ENCODE measurements at regions of chr3 and their contacts with region 1.

Region 1: GRCh38 chr3:69671082-69671952 is 67.9 kb upstream of the MITF start:
- DNase-seq: peak; percentile 68
- H3K4me3 ChIP-seq: no peak overlapping the region; a peak in 2 of 4 replicates
- H3K27ac ChIP-seq: peak overlapping the region in 1 of 2 experiments; percentile 83; a peak in 2 of 4 replicates
- H3K4me1 ChIP-seq: peaks cover 0 to 13% of the 10 kb centered on the region in 2 experiments; a peak in 2 of 4 replicates
- H3K27me3 ChIP-seq: no peaks in the 10 kb centered on the region
- CTCF ChIP-seq: peak; percentile 85
- EP300 ChIP-seq: peak in 1 of 2 experiments; percentile 91; a peak in 2 of 4 replicates
- RAD21 ChIP-seq: peak; percentile 91

Region 2: DNA sequence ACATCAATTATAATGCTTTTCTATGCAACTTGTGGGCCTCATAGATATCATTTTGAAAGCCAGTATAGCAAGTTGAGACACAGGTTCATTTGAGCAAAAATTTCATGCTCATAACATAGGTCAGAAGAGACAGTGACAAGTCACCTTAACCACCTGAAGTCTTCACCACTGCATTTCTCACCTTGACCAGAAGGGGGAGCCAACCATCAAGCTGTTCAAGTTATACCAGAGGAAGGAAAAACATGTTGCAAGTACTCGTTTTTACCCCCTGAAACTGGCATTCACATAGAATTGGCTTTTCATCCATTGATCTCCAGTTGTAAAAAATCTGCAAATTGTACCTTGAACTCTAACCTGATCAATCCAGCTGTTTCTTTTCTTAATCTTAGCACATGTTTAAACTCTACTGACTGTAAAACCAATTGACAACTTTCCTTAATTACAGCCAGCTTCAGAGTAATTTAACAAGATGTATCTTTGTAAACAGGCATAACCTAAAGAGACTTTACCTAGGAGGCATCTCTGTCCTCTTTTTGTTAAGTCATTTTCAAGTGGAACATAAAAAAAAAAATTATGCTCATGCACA is 550.3 kb before region 1 on chr3:
- CTCF ChIA-PET with region 1: interaction called, 10 read pairs
- POLR2A ChIA-PET with region 1: no interaction called
- DNase-seq: peak; percentile 37
- H3K4me3 ChIP-seq: no peak overlapping the region; a peak in 1 of 4 replicates
- H3K27ac ChIP-seq: no peak overlapping the region
- H3K4me1 ChIP-seq: no peaks in the 10 kb centered on the region
- H3K27me3 ChIP-seq: no peaks in the 10 kb centered on the region
- CTCF ChIP-seq: peak; percentile 97
- EP300 ChIP-seq: no peak
- RAD21 ChIP-seq: peak; percentile 86

Region 3: DNA sequence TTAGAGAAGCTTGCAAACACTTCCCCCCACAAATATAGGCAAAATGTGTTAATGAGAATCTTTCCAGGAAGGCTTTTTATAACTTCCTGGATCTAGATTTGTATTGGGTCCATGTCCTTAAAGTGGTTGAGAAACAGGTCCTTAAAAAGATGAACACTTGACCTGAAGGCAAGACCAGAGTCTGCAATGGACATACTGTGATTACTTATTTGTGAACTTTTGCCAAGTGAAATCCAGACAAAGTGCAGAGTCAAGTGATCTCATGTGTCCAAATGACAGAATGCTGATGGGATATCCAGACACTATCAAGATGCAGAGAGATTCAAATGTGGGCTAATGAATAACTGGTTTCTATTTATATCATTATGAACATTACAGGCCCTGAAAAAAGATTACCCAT is 329.2 kb before region 1 on chr3:
- CTCF ChIA-PET with region 1: no interaction called
- POLR2A ChIA-PET with region 1: no interaction called
- DNase-seq: no peak
- H3K4me3 ChIP-seq: no peak overlapping the region
- H3K27ac ChIP-seq: no peak overlapping the region; a peak in 1 of 4 replicates
- H3K4me1 ChIP-seq: peaks cover 0 to 2% of the 10 kb centered on the region in 2 experiments; a peak in 1 of 4 replicates
- H3K27me3 ChIP-seq: no peaks in the 10 kb centered on the region
- CTCF ChIP-seq: no peak
- EP300 ChIP-seq: no peak
- RAD21 ChIP-seq: no peak

Region 4: DNA sequence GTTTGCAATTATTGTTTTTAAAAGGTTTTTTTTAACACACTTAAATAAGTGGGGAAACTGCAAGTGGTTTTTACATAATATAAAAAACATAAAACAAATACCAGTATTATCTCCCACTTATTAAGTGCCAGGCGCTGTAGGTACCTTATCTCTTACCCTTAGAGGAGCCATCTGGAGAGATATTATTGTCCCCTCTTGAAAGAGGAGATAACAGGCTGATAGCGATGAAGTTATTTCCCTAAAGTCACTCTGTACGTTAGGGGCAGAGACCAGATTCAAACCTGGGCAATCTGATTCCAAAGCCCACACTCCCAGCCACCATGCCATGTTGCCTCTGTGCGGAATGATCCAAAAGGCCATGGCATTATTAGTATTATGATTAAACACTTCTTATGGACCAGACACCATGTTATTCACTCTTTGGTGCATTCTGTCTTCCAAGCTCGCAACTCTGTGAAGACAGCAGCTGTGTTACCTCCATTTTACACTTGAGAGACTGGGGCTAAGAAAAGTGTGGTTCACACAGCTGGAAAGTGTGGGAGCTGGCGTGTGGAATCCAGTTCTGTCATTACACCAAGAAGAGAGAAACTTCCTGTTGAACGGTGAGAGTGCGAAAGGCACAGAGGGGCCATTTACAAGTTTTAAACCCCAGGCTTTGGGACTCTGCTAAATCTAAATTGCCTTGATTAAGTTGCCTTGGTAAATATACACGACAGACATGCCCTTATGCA is 12.0 kb before region 1 on chr3:
- CTCF ChIA-PET with region 1: interaction called, 18 read pairs
- POLR2A ChIA-PET with region 1: no interaction called
- DNase-seq: peak; percentile 55
- H3K4me3 ChIP-seq: no peak overlapping the region
- H3K27ac ChIP-seq: peak overlapping the region in 1 of 2 experiments; percentile 22; a peak in 2 of 4 replicates
- H3K4me1 ChIP-seq: peaks cover 0 to 11% of the 10 kb centered on the region in 2 experiments; a peak in 2 of 4 replicates
- H3K27me3 ChIP-seq: peaks cover 9% of the 10 kb centered on the region; the same call in 1 of the 2 replicates
- CTCF ChIP-seq: no peak
- EP300 ChIP-seq: peak in 1 of 2 experiments; percentile 77; a peak in 2 of 4 replicates
- RAD21 ChIP-seq: no peak

Measured in SK-N-SH (cell line).